Activated T-helper 2 cell treated with anti-CD3 and anti-CD28 coated beads, Interferon-gamma antibody, Interleukin-2, Interleukin-4, amounts not matched to agents 10 μg/mL and 5 μg/mL and 100 μg/mL, durations not matched to agents 14 hours and 24 hours and 36 hours (primary cell): ENCODE measurements at regions of chr7 and their contacts with region 1.

Region 1: GRCh38 chr7:136030862-136031318 is 53.7 kb upstream of the MTPN start:
- DNase-seq: no peak
- H3K4me3 Mint-ChIP-seq: no peak overlapping the region
- H3K27ac Mint-ChIP-seq: peak overlapping the region; percentile 21
- H3K4me1 Mint-ChIP-seq: peaks cover 14% of the 10 kb centered on the region
- H3K27me3 Mint-ChIP-seq: peaks cover 13% of the 10 kb centered on the region

Region 2: GRCh38 chr7:136016649-136017395 is 14.1 kb before region 1 on chr7:
- intact Hi-C with region 1: loop called (anchors 1 kb)
- DNase-seq: no peak
- H3K4me3 Mint-ChIP-seq: no peak overlapping the region
- H3K27ac Mint-ChIP-seq: no peak overlapping the region
- H3K4me1 Mint-ChIP-seq: peaks cover 7% of the 10 kb centered on the region
- H3K27me3 Mint-ChIP-seq: peaks cover 17% of the 10 kb centered on the region

Region 3: GRCh38 chr7:136064081-136064480 is 33.2 kb after region 1 on chr7:
- intact Hi-C with region 1: loop called (anchors 1 kb)
- DNase-seq: no peak
- H3K4me3 Mint-ChIP-seq: no peak overlapping the region
- H3K27ac Mint-ChIP-seq: peak overlapping the region; percentile 36
- H3K4me1 Mint-ChIP-seq: peaks cover 8% of the 10 kb centered on the region
- H3K27me3 Mint-ChIP-seq: no peaks in the 10 kb centered on the region

Region 4: GRCh38 chr7:136134503-136134902 is 103.6 kb after region 1 on chr7:
- intact Hi-C with region 1: loop called (anchors 1 kb)
- DNase-seq: no peak
- H3K4me3 Mint-ChIP-seq: no peak overlapping the region
- H3K27ac Mint-ChIP-seq: no peak overlapping the region
- H3K4me1 Mint-ChIP-seq: peaks cover 7% of the 10 kb centered on the region
- H3K27me3 Mint-ChIP-seq: no peaks in the 10 kb centered on the region